ENCODE measurements at regions of chr9 and their contacts with region 1.

Region 1: DNA sequence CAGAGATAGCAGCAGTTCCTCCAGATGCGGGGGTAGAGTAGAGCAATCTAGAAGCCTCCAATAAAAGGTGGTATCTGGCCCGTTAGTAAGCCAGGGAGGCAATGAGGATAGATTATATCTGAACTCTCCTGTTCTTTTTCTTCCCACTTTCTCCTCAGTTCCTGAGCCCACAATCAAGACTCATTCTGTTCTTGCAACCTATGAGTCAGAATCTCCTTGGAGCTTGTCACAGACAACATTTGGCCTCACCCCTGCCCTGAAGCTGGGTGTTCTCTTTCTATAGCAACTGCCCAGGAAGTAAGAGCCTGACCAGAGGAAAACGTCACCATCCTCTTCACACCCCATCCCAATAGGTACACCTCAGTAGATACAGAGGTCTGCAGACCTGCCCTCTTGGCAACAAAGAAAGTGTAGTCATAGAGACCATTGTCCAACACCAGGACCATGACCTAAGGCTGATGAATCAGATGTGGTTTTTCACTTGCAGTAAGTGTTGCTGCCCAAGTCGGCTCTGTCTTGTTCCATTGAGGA is 76.3 kb upstream of the PCA3 start:
- DNase-seq: peak; percentile 91
- H3K4me3 ChIP-seq: no peak overlapping the region
- H3K27ac ChIP-seq: peak overlapping the region; percentile 80
- H3K4me1 ChIP-seq: peaks cover 41% of the 10 kb centered on the region
- H3K27me3 ChIP-seq: no peaks in the 10 kb centered on the region
- CTCF ChIP-seq: no peak
- POLR2A ChIP-seq: peak; percentile 29

Region 2: GRCh38 chr9:76651119-76651705 is 36.7 kb before region 1 on chr9:
- CTCF ChIA-PET with region 1: no interaction called
- POLR2A ChIA-PET with region 1: no interaction called
- dilution Hi-C with region 1: no loop called
- intact Hi-C with region 1: loop called (anchors 2 kb)
- DNase-seq: peak; percentile 56
- H3K4me3 ChIP-seq: peak overlapping the region; percentile 15 to 64 (median 63)
- H3K27ac ChIP-seq: peak overlapping the region; percentile 34
- H3K4me1 ChIP-seq: peaks cover 47% of the 10 kb centered on the region
- H3K27me3 ChIP-seq: no peaks in the 10 kb centered on the region
- CTCF ChIP-seq: no peak
- POLR2A ChIP-seq: no peak

Region 3: GRCh38 chr9:76667521-76667957 is 20.4 kb before region 1 on chr9:
- CTCF ChIA-PET with region 1: interaction called, 6 read pairs
- POLR2A ChIA-PET with region 1: no interaction called
- dilution Hi-C with region 1: no loop called
- intact Hi-C with region 1: loop called (anchors 1 kb)
- DNase-seq: peak; percentile 69
- H3K4me3 ChIP-seq: no peak overlapping the region
- H3K27ac ChIP-seq: peak overlapping the region; percentile 70
- H3K4me1 ChIP-seq: peaks cover 36% of the 10 kb centered on the region
- H3K27me3 ChIP-seq: no peaks in the 10 kb centered on the region
- CTCF ChIP-seq: no peak
- POLR2A ChIP-seq: no peak

Region 4: GRCh38 chr9:76732341-76732958 is 44.5 kb after region 1 on chr9:
- CTCF ChIA-PET with region 1: no interaction called
- POLR2A ChIA-PET with region 1: no interaction called
- dilution Hi-C with region 1: no loop called
- intact Hi-C with region 1: no loop called
- DNase-seq: no peak
- H3K4me3 ChIP-seq: no peak overlapping the region
- H3K27ac ChIP-seq: no peak overlapping the region
- H3K4me1 ChIP-seq: no peaks in the 10 kb centered on the region
- H3K27me3 ChIP-seq: peaks cover 3 to 14% of the 10 kb centered on the region in 2 experiments
- CTCF ChIP-seq: no peak
- POLR2A ChIP-seq: no peak

Measured in endothelial cell of umbilical vein (primary cell).